Endothelial cell of umbilical vein (primary cell): ENCODE measurements at regions of chr1 and their contacts with region 1.

Region 1: DNA sequence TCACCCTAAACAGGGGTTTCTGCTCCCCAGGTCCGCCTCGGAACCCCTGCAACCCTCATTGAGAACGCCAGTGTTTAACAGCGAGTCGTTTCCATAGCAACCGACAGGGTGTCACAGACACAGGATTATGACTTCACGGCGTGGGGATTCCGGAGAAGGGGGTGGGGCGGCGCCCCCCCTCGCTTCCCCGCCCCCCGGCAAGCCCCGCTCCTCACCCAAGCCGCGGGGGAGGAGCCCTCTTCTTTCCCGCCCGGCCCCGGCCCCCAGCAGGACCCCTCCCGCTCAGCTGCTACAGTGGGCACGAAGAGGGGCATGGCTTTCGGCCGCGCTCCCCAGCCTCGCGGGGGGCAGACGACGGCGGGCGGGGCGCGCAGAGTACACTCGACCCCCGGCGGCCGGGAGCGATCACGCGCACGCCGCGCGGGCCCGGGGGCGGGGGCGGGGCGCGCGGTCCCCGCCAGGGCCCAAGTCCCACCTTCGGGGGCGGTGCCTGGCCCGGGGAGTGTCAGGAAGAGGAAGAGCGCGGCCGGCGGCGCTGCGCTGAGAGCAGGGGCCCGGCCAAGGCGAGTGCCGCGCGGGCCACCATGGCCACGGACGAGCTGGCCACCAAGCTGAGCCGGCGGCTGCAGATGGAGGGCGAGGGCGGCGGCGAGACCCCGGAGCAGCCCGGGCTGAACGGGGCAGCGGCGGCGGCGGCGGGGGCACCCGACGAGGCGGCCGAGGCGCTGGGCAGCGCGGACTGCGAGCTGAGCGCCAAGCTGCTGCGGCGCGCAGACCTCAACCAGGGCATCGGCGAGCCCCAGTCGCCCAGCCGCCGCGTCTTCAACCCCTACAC is at the start of gene EFHD2:
- DNase-seq: peak; percentile 73
- H3K4me3 ChIP-seq: peak within 1 kb of the TSS; percentile 82 to 90 (median 82)
- H3K27ac ChIP-seq: peak within 1 kb of the TSS; percentile 58
- H3K4me1 ChIP-seq: peaks cover 32% of the 10 kb centered on the region
- H3K27me3 ChIP-seq: no peaks in the 10 kb centered on the region
- CTCF ChIP-seq: no peak
- POLR2A ChIP-seq: peak; percentile 89
- total RNA-seq, gene EFHD2: 65.5 and 73.5 TPM in 2 replicates

Region 2: GRCh38 chr1:14787604-14788003 is 622.0 kb before region 1 on chr1:
- CTCF ChIA-PET with region 1: no interaction called
- POLR2A ChIA-PET with region 1: no interaction called
- dilution Hi-C with region 1: no loop called
- intact Hi-C with region 1: no loop called
- DNase-seq: no peak
- H3K4me3 ChIP-seq: no peak overlapping the region
- H3K27ac ChIP-seq: no peak overlapping the region
- H3K4me1 ChIP-seq: no peaks in the 10 kb centered on the region
- H3K27me3 ChIP-seq: no peaks in the 10 kb centered on the region
- CTCF ChIP-seq: no peak
- POLR2A ChIP-seq: no peak

Region 3: GRCh38 chr1:15328351-15329103 is 81.1 kb before region 1 on chr1:
- CTCF ChIA-PET with region 1: interaction called, 31 read pairs
- POLR2A ChIA-PET with region 1: interaction called, 4 read pairs
- dilution Hi-C with region 1: loop called (anchors 10 kb)
- intact Hi-C with region 1: loop called (anchors 1 kb)
- DNase-seq: peak; percentile 90
- H3K4me3 ChIP-seq: peak overlapping the region in 1 of 3 experiments; percentile 14
- H3K27ac ChIP-seq: peak overlapping the region; percentile 37
- H3K4me1 ChIP-seq: peaks cover 17% of the 10 kb centered on the region
- H3K27me3 ChIP-seq: no peaks in the 10 kb centered on the region
- CTCF ChIP-seq: no peak
- POLR2A ChIP-seq: no peak

Region 4: DNA sequence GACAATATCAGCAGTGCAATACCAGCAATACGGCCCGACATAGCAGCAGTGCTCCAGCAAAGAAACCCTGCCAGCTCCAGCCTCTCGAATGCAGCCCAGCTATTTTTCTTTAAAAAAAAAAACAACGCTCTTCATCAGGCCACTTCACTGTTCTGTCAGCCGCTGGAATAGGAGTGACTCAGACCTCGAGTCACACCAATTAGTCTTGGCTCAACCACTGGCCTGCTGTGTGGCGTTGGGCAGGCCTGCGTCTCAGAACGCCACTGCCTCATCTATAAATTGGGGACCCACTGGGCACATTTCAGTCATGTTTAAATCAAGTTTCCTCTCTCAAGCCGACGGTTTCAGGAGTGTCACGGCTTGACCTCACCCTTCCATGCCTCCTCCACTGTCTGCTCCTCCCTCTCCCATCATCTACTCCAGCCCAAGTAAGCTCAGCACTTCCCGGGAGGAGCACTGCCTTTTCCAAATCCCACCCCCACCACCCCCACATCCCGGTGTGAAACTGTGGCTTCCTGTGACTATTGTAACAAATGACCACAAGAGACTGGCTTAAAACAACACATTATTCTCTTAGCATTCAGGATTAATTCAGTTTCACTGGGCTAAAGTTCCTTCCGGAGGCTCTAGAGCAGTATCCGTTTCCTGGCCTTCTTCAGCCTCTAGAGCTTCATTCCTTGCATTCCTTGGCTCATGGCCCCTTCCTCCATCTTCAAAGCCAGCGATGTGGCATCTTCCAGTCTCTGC is 71.8 kb before region 1 on chr1:
- CTCF ChIA-PET with region 1: interaction called, 5 read pairs
- POLR2A ChIA-PET with region 1: interaction called, 3 read pairs
- dilution Hi-C with region 1: no loop called
- intact Hi-C with region 1: loop called (anchors 1 kb)
- DNase-seq: peak; percentile 83
- H3K4me3 ChIP-seq: no peak overlapping the region
- H3K27ac ChIP-seq: peak overlapping the region; percentile 89
- H3K4me1 ChIP-seq: peaks cover 44% of the 10 kb centered on the region
- H3K27me3 ChIP-seq: no peaks in the 10 kb centered on the region
- CTCF ChIP-seq: no peak
- POLR2A ChIP-seq: peak; percentile 63

Region 5: GRCh38 chr1:15352123-15352957 is 57.3 kb before region 1 on chr1:
- CTCF ChIA-PET with region 1: no interaction called
- POLR2A ChIA-PET with region 1: no interaction called
- dilution Hi-C with region 1: no loop called
- intact Hi-C with region 1: loop called (anchors 1 kb)
- DNase-seq: peak; percentile 81
- H3K4me3 ChIP-seq: no peak overlapping the region
- H3K27ac ChIP-seq: peak overlapping the region; percentile 73
- H3K4me1 ChIP-seq: peaks cover 20% of the 10 kb centered on the region
- H3K27me3 ChIP-seq: no peaks in the 10 kb centered on the region
- CTCF ChIP-seq: no peak
- POLR2A ChIP-seq: no peak

Region 6: DNA sequence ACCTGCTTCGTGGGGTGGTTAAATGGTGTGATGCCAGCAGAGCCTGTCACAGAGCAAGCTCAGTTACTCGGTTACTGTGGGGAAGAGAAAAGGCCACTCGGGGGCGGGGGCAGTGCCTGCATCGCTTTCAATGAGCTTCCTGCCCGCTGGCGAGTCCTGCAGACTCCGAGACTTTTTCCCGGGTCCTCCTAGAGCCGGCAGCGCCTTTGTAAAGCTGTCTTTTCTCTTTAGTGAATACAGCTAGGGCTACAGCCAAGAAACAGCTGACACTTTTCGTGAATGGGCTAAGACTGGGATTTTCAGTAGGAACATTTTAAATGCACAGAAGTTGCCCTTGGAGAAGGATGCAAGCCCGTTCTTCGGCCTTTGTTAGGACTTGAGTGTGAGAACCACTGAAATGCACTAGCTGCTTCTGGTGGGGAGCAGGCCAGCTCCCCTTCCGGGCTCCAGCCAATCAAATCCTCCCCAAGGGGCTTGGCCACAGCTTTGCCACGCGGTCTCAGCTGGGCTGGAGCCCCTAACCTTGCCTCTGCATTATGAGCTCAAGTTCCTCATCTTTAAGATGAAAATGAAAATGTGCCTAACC is 23.3 kb before region 1 on chr1:
- CTCF ChIA-PET with region 1: interaction called, 4 read pairs
- POLR2A ChIA-PET with region 1: no interaction called
- dilution Hi-C with region 1: no loop called
- intact Hi-C with region 1: loop called (anchors 2 kb)
- DNase-seq: no peak
- H3K4me3 ChIP-seq: no peak overlapping the region
- H3K27ac ChIP-seq: no peak overlapping the region
- H3K4me1 ChIP-seq: no peaks in the 10 kb centered on the region
- H3K27me3 ChIP-seq: peaks cover 0 to 3% of the 10 kb centered on the region in 2 experiments
- CTCF ChIP-seq: no peak
- POLR2A ChIP-seq: no peak